Dendritic cell treated with granulocyte-macrophage colony-stimulating factor and Interleukin-4, amounts not matched to agents 40 ng/mL and 50 ng/mL, for 4 days (primary cell): ENCODE measurements at regions of chr17 and their contacts with region 1.

Region 1: GRCh38 chr17:8189711-8190477 is at the start of gene BORCS6:
- H3K4me3 Mint-ChIP-seq: peak within 1 kb of the TSS; percentile 53
- H3K27ac Mint-ChIP-seq: no peak within 1 kb of the TSS
- H3K4me1 Mint-ChIP-seq: no peaks in the 10 kb centered on the region
- H3K27me3 Mint-ChIP-seq: no peaks in the 10 kb centered on the region

Region 2: DNA sequence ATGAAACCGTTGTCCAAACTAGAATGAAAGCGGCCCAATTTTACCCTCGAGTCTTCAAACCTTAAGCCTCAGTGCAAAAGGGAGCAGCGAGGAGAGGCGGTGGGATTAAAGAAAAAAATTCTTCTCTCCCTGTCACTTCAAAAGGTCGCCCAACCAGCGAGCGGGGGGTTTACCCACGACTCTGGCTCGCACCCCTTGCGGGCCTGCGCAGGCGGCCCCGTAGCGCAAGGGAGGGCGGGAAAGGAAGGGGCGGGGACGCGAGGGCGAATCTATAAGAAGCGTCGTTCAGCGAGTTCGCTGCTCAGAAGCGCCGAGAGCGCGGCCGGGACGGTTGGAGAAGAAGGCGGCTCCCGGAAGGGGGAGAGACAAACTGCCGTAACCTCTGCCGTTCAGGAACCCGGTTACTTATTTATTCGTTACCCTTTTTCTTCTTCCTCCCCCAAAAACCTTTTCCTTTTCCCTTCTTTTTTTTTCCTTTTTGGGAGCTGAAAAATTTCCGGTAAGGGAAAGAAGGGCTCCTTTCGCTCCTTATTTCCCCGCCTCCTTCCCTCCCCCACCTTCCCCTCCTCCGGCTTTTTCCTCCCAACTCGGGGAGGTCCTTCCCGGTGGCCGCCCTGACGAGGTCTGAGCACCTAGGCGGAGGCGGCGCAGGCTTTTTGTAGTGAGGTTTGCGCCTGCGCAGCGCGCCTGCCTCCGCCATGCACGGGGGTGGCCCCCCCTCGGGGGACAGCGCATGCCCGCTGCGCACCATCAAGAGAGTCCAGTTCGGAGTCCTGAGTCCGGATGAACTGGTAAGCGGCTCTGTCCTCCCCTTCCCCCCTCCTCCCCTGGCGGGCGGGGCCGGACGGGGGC is 705.6 kb before region 1 on chr17 and contains the start of gene POLR2A:
- intact Hi-C with region 1: no loop called
- H3K4me3 Mint-ChIP-seq: peak within 1 kb of the TSS; percentile 97
- H3K27ac Mint-ChIP-seq: peak within 1 kb of the TSS; percentile 100
- H3K4me1 Mint-ChIP-seq: peaks cover 76% of the 10 kb centered on the region
- H3K27me3 Mint-ChIP-seq: no peaks in the 10 kb centered on the region

Region 3: GRCh38 chr17:8138672-8139371 is 51.1 kb before region 1 on chr17:
- intact Hi-C with region 1: loop called (anchors 2 kb)
- H3K4me3 Mint-ChIP-seq: no peak overlapping the region
- H3K27ac Mint-ChIP-seq: no peak overlapping the region
- H3K4me1 Mint-ChIP-seq: no peaks in the 10 kb centered on the region
- H3K27me3 Mint-ChIP-seq: peaks cover 14% of the 10 kb centered on the region

Region 4: GRCh38 chr17:8204761-8205555 is 15.1 kb after region 1 on chr17:
- intact Hi-C with region 1: loop called (anchors 1 kb)
- H3K4me3 Mint-ChIP-seq: no peak overlapping the region
- H3K27ac Mint-ChIP-seq: peak overlapping the region; percentile 12
- H3K4me1 Mint-ChIP-seq: peaks cover 23% of the 10 kb centered on the region
- H3K27me3 Mint-ChIP-seq: no peaks in the 10 kb centered on the region

Region 5: GRCh38 chr17:8222630-8223356 is 32.9 kb after region 1 on chr17:
- intact Hi-C with region 1: loop called (anchors 1 kb)
- H3K4me3 Mint-ChIP-seq: peak overlapping the region; percentile 89
- H3K27ac Mint-ChIP-seq: peak overlapping the region; percentile 99
- H3K4me1 Mint-ChIP-seq: peaks cover 63% of the 10 kb centered on the region
- H3K27me3 Mint-ChIP-seq: no peaks in the 10 kb centered on the region

Region 6: GRCh38 chr17:8248751-8249607 is 59.1 kb after region 1 on chr17 and contains the start of gene PFAS:
- intact Hi-C with region 1: loop called (anchors 1 kb)
- H3K4me3 Mint-ChIP-seq: peak within 1 kb of the TSS; percentile 90
- H3K27ac Mint-ChIP-seq: peak within 1 kb of the TSS; percentile 99
- H3K4me1 Mint-ChIP-seq: peaks cover 33% of the 10 kb centered on the region
- H3K27me3 Mint-ChIP-seq: no peaks in the 10 kb centered on the region

Region 7: GRCh38 chr17:8300627-8301242 is 110.8 kb after region 1 on chr17:
- intact Hi-C with region 1: loop called (anchors 5 kb)
- H3K4me3 Mint-ChIP-seq: no peak overlapping the region
- H3K27ac Mint-ChIP-seq: no peak overlapping the region
- H3K4me1 Mint-ChIP-seq: peaks cover 17% of the 10 kb centered on the region
- H3K27me3 Mint-ChIP-seq: peaks cover 2% of the 10 kb centered on the region